Endothelial cell of umbilical vein (primary cell): ENCODE measurements at regions of chr19 and their contacts with region 1.

Region 1: GRCh38 chr19:4791170-4792018 is at the start of gene FEM1A:
- DNase-seq: peak; percentile 100
- H3K4me3 ChIP-seq: peak within 1 kb of the TSS; percentile 25 to 88 (median 45)
- H3K27ac ChIP-seq: peak within 1 kb of the TSS; percentile 69
- H3K4me1 ChIP-seq: peaks cover 8% of the 10 kb centered on the region
- H3K27me3 ChIP-seq: no peaks in the 10 kb centered on the region
- CTCF ChIP-seq: peak; percentile 98 to 100
- POLR2A ChIP-seq: peak; percentile 72
- total RNA-seq, gene FEM1A: 11.4 TPM in 2 replicates

Region 2: GRCh38 chr19:4732680-4733114 is 58.7 kb before region 1 on chr19:
- CTCF ChIA-PET with region 1: interaction called, 362 read pairs
- POLR2A ChIA-PET with region 1: interaction called, 4 read pairs
- dilution Hi-C with region 1: no loop called
- intact Hi-C with region 1: loop called (anchors 1 kb)
- DNase-seq: peak; percentile 48
- H3K4me3 ChIP-seq: no peak overlapping the region
- H3K27ac ChIP-seq: no peak overlapping the region
- H3K4me1 ChIP-seq: no peaks in the 10 kb centered on the region
- H3K27me3 ChIP-seq: no peaks in the 10 kb centered on the region
- CTCF ChIP-seq: peak; percentile 44 to 74
- POLR2A ChIP-seq: no peak

Region 3: DNA sequence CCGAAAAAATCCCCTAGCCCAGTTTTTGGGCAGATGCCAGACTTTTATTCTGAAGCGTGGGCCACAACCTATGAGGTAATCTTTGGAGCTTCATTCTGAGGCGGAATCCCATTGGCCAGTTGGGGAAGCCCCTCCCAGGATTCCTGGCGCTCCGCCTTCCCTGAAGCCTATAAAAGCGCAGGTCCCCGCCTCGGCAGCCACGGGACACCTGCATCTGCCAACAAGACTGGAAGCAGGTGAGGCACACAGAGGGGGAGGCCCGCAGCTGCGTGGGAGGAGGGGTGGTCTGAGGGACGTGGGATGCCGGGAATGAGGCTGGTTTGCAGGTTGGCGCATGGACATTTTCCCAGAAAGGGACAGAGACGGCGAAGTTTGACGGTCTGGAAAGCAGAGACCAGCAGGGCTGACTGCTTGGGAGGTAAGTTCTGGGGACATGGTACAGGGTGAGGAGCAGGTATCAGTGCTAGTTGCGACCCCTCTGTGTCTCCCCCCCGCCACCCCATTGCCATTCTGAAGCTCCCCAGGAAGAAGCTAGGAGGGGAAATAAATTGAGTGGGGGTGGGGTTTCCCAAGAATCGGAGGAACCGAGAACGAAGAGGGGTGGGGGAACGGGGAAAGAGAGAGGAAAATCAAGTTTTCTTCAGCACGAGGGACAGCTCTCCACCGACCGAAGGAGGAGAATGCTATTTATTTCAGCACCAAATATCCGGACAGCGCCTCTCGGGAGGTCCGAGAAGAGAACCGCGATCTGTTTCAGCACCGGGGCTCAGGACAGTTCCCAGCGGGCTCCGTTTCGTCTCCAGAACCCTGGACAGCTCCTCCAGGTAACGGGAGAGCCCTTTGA is 22.2 kb before region 1 on chr19:
- CTCF ChIA-PET with region 1: interaction called, 11 read pairs
- POLR2A ChIA-PET with region 1: no interaction called
- dilution Hi-C with region 1: no loop called
- intact Hi-C with region 1: no loop called
- DNase-seq: peak; percentile 75
- H3K4me3 ChIP-seq: no peak overlapping the region
- H3K27ac ChIP-seq: no peak overlapping the region
- H3K4me1 ChIP-seq: no peaks in the 10 kb centered on the region
- H3K27me3 ChIP-seq: no peaks in the 10 kb centered on the region
- CTCF ChIP-seq: no peak
- POLR2A ChIP-seq: no peak

Region 4: GRCh38 chr19:4776436-4777205 is 14.8 kb before region 1 on chr19:
- CTCF ChIA-PET with region 1: interaction called, 19 read pairs
- POLR2A ChIA-PET with region 1: no interaction called
- dilution Hi-C with region 1: no loop called
- intact Hi-C with region 1: no loop called
- DNase-seq: no peak
- H3K4me3 ChIP-seq: no peak overlapping the region
- H3K27ac ChIP-seq: no peak overlapping the region
- H3K4me1 ChIP-seq: no peaks in the 10 kb centered on the region
- H3K27me3 ChIP-seq: no peaks in the 10 kb centered on the region
- CTCF ChIP-seq: no peak
- POLR2A ChIP-seq: no peak

Region 5: DNA sequence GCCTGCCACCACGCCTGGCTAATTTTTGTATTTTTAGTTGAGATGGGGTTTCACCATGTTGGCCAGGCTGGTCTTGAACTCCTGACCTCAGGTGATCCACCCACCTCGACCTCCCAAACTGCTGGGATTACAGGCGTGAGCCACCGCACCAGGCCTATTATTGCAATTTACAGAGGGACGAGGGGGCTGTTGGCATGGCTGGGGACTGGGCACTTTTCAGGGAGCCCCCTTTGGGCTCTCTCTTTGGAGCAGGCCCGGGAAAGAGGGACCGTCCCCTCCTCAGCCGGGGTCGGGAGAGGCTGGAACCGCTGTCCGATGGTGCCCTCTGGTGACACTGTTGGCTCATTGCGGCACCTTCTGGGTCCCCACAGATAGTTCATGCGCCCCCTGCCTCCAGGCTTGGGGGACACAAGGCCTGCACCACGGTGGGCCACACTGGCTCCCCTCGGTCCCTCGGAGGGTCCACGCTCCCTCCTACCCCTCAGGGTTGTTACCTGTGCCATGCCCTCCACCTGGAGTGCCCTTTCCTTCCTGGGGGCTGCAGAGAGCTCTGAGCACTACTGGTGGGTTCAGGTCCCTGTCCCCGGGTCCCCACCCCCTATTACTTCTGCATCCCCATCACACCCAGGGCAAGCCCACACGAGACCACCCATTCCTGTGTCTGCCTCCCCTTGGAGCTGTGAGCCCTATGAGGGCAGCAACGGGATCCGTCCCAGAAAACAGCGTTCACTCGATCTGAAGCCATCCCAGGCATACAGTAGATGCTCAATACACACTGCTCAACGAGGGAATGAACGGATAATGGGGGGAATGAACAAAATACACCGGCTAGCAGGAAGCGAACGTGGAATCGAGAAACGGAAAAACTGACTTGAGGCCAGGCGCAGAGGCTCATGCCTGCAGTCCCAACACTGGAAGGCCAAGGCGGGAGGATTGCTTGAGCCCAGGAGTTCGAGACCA is 12.6 kb after region 1 on chr19:
- CTCF ChIA-PET with region 1: interaction called, 19 read pairs
- POLR2A ChIA-PET with region 1: interaction called, 3 read pairs
- dilution Hi-C with region 1: no loop called
- intact Hi-C with region 1: no loop called
- DNase-seq: peak; percentile 56
- H3K4me3 ChIP-seq: no peak overlapping the region
- H3K27ac ChIP-seq: no peak overlapping the region
- H3K4me1 ChIP-seq: no peaks in the 10 kb centered on the region
- H3K27me3 ChIP-seq: no peaks in the 10 kb centered on the region
- CTCF ChIP-seq: peak; percentile 77 to 95
- POLR2A ChIP-seq: no peak

Region 6: DNA sequence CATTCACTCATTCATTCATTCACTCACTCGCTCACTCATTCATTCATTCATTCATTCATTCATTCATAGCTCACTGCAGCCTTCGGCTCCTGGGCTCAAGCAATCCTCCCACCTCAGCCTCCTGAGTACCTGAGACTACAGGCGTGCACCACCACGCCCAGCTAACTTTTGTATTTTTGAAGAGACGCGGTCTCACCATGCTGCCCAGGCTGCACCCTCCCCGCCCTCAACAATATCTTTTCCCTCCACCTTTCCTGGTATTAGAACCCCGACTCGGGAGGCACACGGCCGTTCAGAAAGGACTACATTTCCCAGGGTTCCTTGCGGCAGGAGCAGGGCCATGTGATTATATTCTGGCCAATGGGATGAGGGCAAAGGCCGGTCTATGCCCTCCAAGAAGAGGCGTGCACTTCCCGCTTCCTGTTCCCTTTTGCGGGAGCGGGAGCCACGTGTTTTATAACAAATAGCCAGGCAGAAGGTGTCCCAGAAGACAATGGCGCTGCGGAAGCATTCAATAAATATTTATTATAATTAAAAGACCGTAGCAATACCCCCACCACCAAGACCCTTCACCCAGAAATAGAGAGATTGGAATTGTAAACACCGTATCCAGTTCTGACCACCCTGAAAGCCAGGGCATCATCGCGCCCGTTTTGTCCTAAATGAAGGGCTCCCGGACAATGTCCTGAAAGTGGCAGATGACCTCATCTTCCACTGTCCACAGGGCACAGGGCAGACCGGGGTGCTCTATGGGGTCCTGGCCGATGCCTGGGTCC is 24.2 kb after region 1 on chr19:
- CTCF ChIA-PET with region 1: interaction called, 19 read pairs
- POLR2A ChIA-PET with region 1: no interaction called
- dilution Hi-C with region 1: no loop called
- intact Hi-C with region 1: no loop called
- DNase-seq: peak; percentile 88
- H3K4me3 ChIP-seq: peak overlapping the region in 1 of 3 experiments; percentile 14
- H3K27ac ChIP-seq: no peak overlapping the region
- H3K4me1 ChIP-seq: peaks cover 5% of the 10 kb centered on the region
- H3K27me3 ChIP-seq: no peaks in the 10 kb centered on the region
- CTCF ChIP-seq: no peak
- POLR2A ChIP-seq: no peak

Region 7: DNA sequence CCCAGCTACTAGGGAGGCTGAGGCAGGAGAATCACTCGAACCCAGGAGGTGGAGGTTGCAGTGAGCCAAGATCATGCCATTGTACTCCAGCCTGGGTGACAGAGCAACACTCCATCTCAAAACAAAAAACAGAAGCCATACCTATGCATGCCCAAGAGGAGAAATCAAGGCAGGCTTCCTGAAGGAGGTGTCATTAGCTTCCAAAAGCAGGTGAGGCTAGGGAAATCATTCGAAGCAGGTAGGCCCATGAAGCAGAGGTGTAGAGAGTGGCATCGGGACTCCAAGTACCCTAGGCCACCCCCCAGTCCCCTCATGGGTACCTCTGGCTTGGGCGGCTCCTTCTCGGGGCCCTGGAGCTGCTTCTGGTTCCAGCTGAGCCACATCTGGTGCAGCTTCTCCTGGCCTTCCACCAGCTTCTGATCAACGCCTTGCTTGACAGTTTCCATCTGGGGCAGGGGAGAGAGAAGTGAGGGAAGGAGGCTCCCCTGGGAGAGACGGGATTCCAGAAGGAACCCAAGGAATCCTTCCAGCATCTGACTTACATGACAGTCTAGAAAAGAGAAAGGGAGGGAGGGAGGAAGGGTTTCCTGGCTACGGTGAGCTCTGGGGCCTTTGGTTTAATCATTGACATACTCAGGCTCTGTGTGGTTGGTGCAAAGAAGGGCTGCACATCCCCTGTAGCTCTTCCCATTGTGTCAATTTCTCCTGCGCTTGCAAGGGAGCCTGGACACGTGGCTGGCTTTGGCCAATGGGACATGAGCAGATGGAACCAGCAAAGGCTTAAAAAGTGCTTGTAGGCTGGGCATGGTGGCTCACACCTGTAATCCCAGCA is 53.2 kb after region 1 on chr19:
- CTCF ChIA-PET with region 1: no interaction called
- POLR2A ChIA-PET with region 1: no interaction called
- dilution Hi-C with region 1: no loop called
- intact Hi-C with region 1: no loop called
- DNase-seq: no peak
- H3K4me3 ChIP-seq: no peak overlapping the region
- H3K27ac ChIP-seq: no peak overlapping the region
- H3K4me1 ChIP-seq: no peaks in the 10 kb centered on the region
- H3K27me3 ChIP-seq: no peaks in the 10 kb centered on the region
- CTCF ChIP-seq: no peak
- POLR2A ChIP-seq: no peak